ENCODE measurements at regions of chr2 and their contacts with region 1.

Region 1: DNA sequence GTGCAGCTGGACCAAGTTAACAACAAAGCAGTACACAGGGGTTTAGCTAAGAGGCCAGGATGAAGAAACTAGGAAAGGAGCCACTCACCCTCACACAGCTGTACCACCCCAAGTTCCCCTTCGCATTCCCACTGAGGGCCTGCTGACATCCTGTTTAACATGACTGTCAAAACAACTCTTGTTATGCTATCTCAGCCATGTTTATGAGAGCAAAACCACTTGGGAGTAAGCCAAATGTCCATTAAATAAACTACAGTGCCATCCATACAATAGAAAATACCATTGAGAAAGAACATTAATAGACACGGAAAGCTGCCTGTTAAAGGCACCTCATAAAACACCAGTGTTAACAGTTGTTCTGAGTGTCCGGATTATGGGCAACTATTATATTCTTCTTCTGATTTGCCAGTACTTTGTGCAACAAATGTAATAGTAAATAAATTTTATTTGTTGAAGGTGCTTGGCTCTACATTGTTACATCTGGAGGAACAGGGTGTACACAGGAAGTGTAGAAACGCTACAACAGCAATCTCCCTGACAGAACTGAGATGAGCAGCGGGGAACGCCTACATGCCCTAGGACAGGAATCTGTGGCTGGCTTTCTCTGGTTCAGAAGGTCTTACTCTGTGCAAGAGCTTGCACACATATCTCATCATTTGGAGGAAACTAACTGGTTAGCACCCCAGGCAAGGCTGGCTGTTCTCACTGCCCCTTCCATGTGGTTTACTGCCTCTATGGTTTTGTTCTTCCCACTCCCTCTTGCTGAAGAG is 85.6 kb downstream of the EHD3 start:
- DNase-seq: no peak
- H3K4me3 ChIP-seq: no peak overlapping the region
- H3K27ac ChIP-seq: peak overlapping the region in 1 of 2 donors; percentile 42
- H3K4me1 ChIP-seq: peaks cover 5 to 23% of the 10 kb centered on the region in 2 donors
- H3K27me3 ChIP-seq: no peaks in the 10 kb centered on the region
- CTCF ChIP-seq: no peak

Region 2: GRCh38 chr2:31233741-31234682 is 85.6 kb before region 1 on chr2 and contains the start of gene EHD3:
- intact Hi-C with region 1: loop called (anchors 5 kb)
- DNase-seq: peak; percentile 71 to 95
- H3K4me3 ChIP-seq: peak within 1 kb of the TSS; percentile 55 to 77
- H3K27ac ChIP-seq: peak within 1 kb of the TSS; percentile 82 to 99
- H3K4me1 ChIP-seq: peaks cover 19 to 37% of the 10 kb centered on the region in 2 donors
- H3K27me3 ChIP-seq: no peaks in the 10 kb centered on the region
- CTCF ChIP-seq: peak; percentile 61 to 78 (median 71)
- total RNA-seq, gene EHD3: 22.5 TPM

Region 3: GRCh38 chr2:31297751-31298150 is 21.8 kb before region 1 on chr2:
- intact Hi-C with region 1: loop called (anchors 1 kb)
- DNase-seq: no peak
- H3K4me3 ChIP-seq: no peak overlapping the region
- H3K27ac ChIP-seq: peak overlapping the region; percentile 84 to 86
- H3K4me1 ChIP-seq: peaks cover 10 to 40% of the 10 kb centered on the region in 2 donors
- H3K27me3 ChIP-seq: no peaks in the 10 kb centered on the region
- CTCF ChIP-seq: no peak

Measured in ascending aorta (tissue), 2 donors.